Common myeloid progenitor, CD34-positive (primary cell): ENCODE measurements at regions of chr2 and their contacts with region 1.

Region 1: GRCh38 chr2:70367722-70368323 is 66.0 kb upstream of the FAM136A start:
- DNase-seq: no peak
- H3K4me3 ChIP-seq: no peak overlapping the region
- H3K27ac ChIP-seq: no peak overlapping the region
- H3K4me1 ChIP-seq: no peaks in the 10 kb centered on the region
- H3K27me3 ChIP-seq: peaks cover 0 to 4% (median 2%) of the 10 kb centered on the region in 5 experiments

Region 2: DNA sequence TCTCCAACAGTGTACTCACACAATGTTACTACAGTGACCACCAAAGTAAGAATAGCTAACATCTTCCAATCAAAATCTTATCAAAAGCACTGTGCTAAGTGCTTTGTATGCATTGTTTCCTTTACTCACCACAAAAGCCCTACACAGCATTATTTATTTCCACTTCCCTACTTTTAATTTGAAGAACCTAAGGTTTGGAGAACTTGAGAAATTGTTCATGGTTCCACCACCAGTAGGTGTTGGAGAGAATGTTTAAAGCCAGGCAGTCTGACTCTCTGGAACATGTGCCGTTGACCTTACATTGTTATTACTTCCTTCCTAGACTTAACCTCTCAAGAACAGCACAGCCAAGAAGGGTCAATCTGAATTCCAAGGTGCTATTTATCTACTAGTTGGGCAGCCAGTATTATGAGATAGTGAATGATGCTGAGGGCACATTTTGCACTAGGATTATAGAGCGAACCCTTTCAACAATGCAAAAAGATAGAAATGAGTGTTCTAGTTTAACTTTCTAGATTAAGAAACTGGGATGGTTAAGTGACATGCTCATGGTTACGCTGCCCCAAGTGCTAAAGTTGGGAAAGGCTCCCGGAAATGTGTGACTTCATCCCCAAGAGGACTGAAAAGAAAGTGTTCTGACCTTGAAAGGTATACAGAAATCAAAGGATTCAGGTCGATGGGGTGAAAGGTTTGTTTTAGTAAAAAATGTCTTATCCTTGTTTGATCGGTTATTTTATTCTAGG is 10.7 kb before region 1 on chr2:
- CTCF ChIA-PET with region 1: interaction called, 12 read pairs
- POLR2A ChIA-PET with region 1: no interaction called
- DNase-seq: peak; percentile 11 to 43 (median 40)
- H3K4me3 ChIP-seq: no peak overlapping the region
- H3K27ac ChIP-seq: no peak overlapping the region
- H3K4me1 ChIP-seq: peaks cover 0 to 2% (median 0%) of the 10 kb centered on the region in 4 experiments
- H3K27me3 ChIP-seq: peaks cover 0 to 55% (median 8%) of the 10 kb centered on the region in 5 experiments

Region 3: GRCh38 chr2:70498054-70498453 is 130.2 kb after region 1 on chr2:
- CTCF ChIA-PET with region 1: no interaction called
- POLR2A ChIA-PET with region 1: no interaction called
- DNase-seq: peak; percentile 14 to 50 (median 28)
- H3K4me3 ChIP-seq: no peak overlapping the region
- H3K27ac ChIP-seq: no peak overlapping the region
- H3K4me1 ChIP-seq: no peaks in the 10 kb centered on the region
- H3K27me3 ChIP-seq: no peaks in the 10 kb centered on the region